GM12878 (cell line): ENCODE measurements at regions of chr5 and their contacts with region 1.

Region 1: DNA sequence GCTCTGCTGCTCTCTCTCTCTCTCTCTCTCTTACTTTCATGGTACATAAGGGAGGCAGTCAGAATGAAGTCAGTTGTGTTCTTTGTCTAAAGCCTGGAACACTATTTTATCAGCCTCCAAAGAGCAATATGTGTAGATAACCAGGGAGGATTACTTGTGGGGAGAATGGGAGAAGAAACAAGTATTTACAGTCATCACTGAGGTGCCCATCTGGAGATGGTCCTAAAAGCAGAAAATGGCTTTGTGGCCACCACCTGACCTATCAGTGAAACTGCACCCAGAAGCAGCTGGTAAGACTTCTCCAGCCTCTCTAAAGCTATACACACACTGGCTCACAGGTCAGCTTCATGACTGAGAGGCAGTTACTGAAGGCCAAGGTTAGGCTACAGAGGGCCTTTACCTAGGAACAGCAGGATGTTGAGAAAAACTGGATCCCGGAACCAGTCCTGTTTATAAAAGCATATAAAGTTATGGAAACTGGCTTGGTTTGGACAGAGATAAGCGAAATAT is 75.1 kb downstream of the MRPS27 start:
- DNase-seq: no peak
- ATAC-seq: peak; percentile 95
- H3K4me3 ChIP-seq: no peak overlapping the region
- H3K27ac ChIP-seq: no peak overlapping the region
- H3K4me1 ChIP-seq: peaks cover 10% of the 10 kb centered on the region; the same call in 1 of the 2 replicates
- H3K27me3 ChIP-seq: no peaks in the 10 kb centered on the region
- CTCF ChIP-seq: peak; percentile 39 to 51 (median 48); a peak in 5 of 6 replicates
- EP300 ChIP-seq: no peak
- POLR2A ChIP-seq: no peak
- RAD21 ChIP-seq: peak; percentile 56

Region 2: GRCh38 chr5:71782771-71783770 is 461.8 kb before region 1 on chr5:
- CTCF ChIA-PET with region 1: interaction called, 3 read pairs
- POLR2A ChIA-PET with region 1: no interaction called
- RAD21 ChIA-PET with region 1: interaction called, 3 read pairs
- SMC1A ChIA-PET with region 1: no interaction called
- in situ Hi-C with region 1: loop called (anchors 10 kb)
- intact Hi-C with region 1: loop called (anchors 10 kb)
- DNase-seq: peak; percentile 60
- ATAC-seq: peak; percentile 95
- H3K4me3 ChIP-seq: peak overlapping the region; percentile 1; the same call in 1 of the 2 replicates
- H3K27ac ChIP-seq: no peak overlapping the region; the same call in 1 of the 2 replicates
- H3K4me1 ChIP-seq: peaks cover 15% of the 10 kb centered on the region
- H3K27me3 ChIP-seq: no peaks in the 10 kb centered on the region; a peak in 1 of 4 replicates
- CTCF ChIP-seq: peak; percentile 61 to 71 (median 70)
- EP300 ChIP-seq: no peak; a peak in 1 of 4 replicates
- POLR2A ChIP-seq: no peak
- RAD21 ChIP-seq: peak; percentile 72

Region 3: GRCh38 chr5:72138943-72139521 is 105.9 kb before region 1 on chr5:
- CTCF ChIA-PET with region 1: interaction called, 12 read pairs
- POLR2A ChIA-PET with region 1: no interaction called
- RAD21 ChIA-PET with region 1: interaction called, 3 read pairs
- SMC1A ChIA-PET with region 1: interaction called, 4 read pairs
- in situ Hi-C with region 1: no loop called
- intact Hi-C with region 1: loop called (anchors 2 kb)
- DNase-seq: peak; percentile 15
- ATAC-seq: peak; percentile 74
- H3K4me3 ChIP-seq: no peak overlapping the region
- H3K27ac ChIP-seq: no peak overlapping the region
- H3K4me1 ChIP-seq: peaks cover 6% of the 10 kb centered on the region; the same call in 1 of the 2 replicates
- H3K27me3 ChIP-seq: peaks cover 0 to 2% of the 10 kb centered on the region in 2 experiments; a peak in 1 of 4 replicates
- CTCF ChIP-seq: no peak
- EP300 ChIP-seq: no peak
- POLR2A ChIP-seq: no peak
- RAD21 ChIP-seq: no peak

Region 4: DNA sequence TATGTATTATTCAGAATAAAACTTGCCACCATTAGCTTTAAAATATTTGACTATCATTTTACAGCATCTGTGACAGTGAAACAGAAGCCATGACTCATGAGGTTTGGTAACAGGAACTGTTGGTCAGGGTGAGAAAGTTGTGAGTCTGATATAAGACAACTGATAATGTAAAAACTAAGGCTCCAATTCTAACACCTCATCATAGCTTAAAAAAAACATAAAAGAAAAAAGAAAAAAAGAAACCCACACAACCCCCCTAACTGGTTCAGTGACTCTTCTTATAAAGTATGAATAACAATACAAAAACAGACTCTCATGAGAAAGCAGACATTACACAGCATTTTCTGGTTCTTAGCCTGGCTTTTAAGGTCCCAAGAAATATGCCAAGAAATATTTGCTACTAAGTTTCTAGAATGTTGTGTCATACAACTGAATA is 10.6 kb before region 1 on chr5:
- CTCF ChIA-PET with region 1: interaction called, 19 read pairs
- POLR2A ChIA-PET with region 1: no interaction called
- RAD21 ChIA-PET with region 1: interaction called, 7 read pairs
- SMC1A ChIA-PET with region 1: interaction called, 13 read pairs
- in situ Hi-C with region 1: no loop called
- intact Hi-C with region 1: no loop called
- DNase-seq: peak; percentile 52
- ATAC-seq: peak; percentile 96
- H3K4me3 ChIP-seq: no peak overlapping the region
- H3K27ac ChIP-seq: peak overlapping the region; percentile 32
- H3K4me1 ChIP-seq: peaks cover 32% of the 10 kb centered on the region
- H3K27me3 ChIP-seq: no peaks in the 10 kb centered on the region
- CTCF ChIP-seq: no peak
- EP300 ChIP-seq: peak; percentile 54 to 81; a peak in 2 of 4 replicates
- POLR2A ChIP-seq: no peak
- RAD21 ChIP-seq: no peak

Region 5: DNA sequence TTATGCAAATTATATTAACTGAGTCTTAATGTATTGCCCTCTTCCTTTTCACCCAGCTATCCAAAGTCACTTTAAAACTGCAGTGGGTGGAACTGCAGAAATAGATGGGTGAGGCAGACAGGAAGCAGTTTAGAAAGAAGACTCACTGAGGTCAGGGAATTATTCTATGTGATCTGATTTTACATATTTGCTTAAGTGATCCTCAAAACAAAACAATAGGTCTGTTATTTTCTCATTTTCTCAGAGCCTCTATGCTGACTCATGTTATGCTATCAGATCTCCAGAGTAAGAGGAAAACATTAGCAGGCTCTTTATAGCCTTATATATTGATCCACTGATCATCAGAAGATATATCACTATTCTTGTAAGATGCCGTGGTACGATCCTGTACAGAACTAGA is 11.6 kb after region 1 on chr5:
- CTCF ChIA-PET with region 1: interaction called, 11 read pairs
- POLR2A ChIA-PET with region 1: no interaction called
- RAD21 ChIA-PET with region 1: interaction called, 3 read pairs
- SMC1A ChIA-PET with region 1: interaction called, 9 read pairs
- in situ Hi-C with region 1: no loop called
- intact Hi-C with region 1: no loop called
- DNase-seq: no peak
- ATAC-seq: no peak
- H3K4me3 ChIP-seq: no peak overlapping the region
- H3K27ac ChIP-seq: no peak overlapping the region
- H3K4me1 ChIP-seq: no peaks in the 10 kb centered on the region
- H3K27me3 ChIP-seq: no peaks in the 10 kb centered on the region
- CTCF ChIP-seq: no peak
- EP300 ChIP-seq: no peak
- POLR2A ChIP-seq: no peak
- RAD21 ChIP-seq: no peak

Region 6: DNA sequence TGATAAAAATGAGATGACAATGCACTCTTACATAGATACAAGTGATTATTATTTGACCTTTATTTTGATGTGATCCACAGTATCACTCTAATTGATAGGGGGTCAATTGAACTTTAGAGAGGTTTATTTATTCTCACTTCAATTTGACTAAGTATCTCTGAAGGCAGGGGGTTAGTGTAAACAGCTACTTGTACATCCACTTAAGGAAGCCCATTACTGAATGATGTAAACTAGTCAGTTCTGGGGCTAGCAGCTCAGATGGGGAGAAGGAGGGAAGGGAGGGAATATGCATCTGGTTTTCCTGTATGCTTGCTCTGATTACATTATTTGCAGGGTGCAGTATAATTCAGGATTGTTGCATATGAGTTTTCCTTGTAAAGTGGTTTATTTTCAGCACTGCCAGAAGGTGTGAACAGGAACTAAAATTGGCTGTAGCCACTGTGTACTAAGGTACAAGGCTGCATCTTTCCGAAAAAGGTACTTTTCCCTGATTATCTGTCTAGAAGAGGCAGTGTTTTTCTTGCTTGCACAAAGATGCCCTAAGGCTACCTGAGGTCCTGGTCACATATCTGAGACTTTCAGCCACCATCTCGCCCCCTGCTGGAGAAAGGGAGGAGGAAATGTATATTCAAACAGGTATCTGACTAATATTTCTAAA is 24.0 kb after region 1 on chr5:
- CTCF ChIA-PET with region 1: interaction called, 13 read pairs
- POLR2A ChIA-PET with region 1: interaction called, 4 read pairs
- RAD21 ChIA-PET with region 1: no interaction called
- SMC1A ChIA-PET with region 1: interaction called, 3 read pairs
- in situ Hi-C with region 1: no loop called
- intact Hi-C with region 1: no loop called
- DNase-seq: no peak
- ATAC-seq: peak; percentile 90
- H3K4me3 ChIP-seq: no peak overlapping the region
- H3K27ac ChIP-seq: no peak overlapping the region
- H3K4me1 ChIP-seq: no peaks in the 10 kb centered on the region
- H3K27me3 ChIP-seq: no peaks in the 10 kb centered on the region
- CTCF ChIP-seq: peak; percentile 65 to 68 (median 67); a peak in 5 of 6 replicates
- EP300 ChIP-seq: no peak
- POLR2A ChIP-seq: no peak
- RAD21 ChIP-seq: peak; percentile 73